ENCODE measurements at regions of chr9 and their contacts with region 1.

Region 1: DNA sequence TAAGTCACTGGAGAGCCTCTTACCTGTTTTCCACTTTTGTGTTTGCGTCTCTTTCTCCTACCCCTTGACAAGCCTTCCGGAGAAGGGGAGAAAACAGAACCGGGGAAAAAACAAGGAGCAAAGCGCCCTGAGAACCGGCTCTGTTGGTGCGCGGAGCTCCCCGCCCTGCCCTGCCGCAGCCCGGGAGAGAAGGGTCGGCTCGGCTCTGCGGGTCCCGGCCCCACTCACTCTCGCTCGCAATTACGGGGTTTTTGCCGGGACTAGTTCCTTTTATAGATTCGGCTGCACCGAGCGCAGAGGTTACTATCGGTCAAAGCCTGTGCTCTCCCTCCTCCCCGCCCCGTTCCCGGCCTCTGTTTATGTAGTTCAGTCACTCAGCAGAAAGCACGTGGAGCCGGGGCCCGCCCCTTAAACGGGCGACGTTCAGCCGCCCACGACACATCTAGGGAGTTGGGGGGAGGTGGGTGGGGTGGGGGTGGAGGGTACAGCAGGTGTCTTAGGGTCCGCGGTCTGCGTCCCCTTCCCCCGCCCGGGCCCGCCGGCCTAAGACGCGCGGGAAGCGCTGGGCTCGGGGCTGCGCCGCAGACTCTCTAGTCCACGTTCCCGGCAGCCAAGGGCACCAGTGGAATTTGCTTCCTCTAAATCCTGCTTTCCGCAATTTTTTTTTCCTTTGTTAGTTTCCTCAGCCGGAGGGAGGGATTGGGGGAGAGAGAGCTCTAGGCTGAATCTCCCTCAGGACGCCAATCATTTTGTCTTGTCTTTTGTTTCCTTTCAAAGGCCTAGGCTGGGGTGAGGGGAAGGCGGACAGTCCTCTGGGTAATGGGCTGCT is at the start of gene ABCA1:
- DNase-seq: peak; percentile 82
- H3K4me3 ChIP-seq: peak within 1 kb of the TSS; percentile 22 to 93 (median 53)
- H3K27ac ChIP-seq: no peak within 1 kb of the TSS
- H3K4me1 ChIP-seq: peaks cover 8% of the 10 kb centered on the region
- H3K27me3 ChIP-seq: no peaks in the 10 kb centered on the region
- CTCF ChIP-seq: no peak
- POLR2A ChIP-seq: no peak
- total RNA-seq, gene ABCA1: 6.6 and 9.8 TPM in 2 replicates

Region 2: GRCh38 chr9:104780799-104781395 is 147.2 kb before region 1 on chr9:
- CTCF ChIA-PET with region 1: interaction called, 3 read pairs
- POLR2A ChIA-PET with region 1: no interaction called
- dilution Hi-C with region 1: no loop called
- intact Hi-C with region 1: loop called (anchors 2 kb)
- DNase-seq: peak; percentile 29
- H3K4me3 ChIP-seq: no peak overlapping the region
- H3K27ac ChIP-seq: no peak overlapping the region
- H3K4me1 ChIP-seq: no peaks in the 10 kb centered on the region
- H3K27me3 ChIP-seq: peaks cover 0 to 5% of the 10 kb centered on the region in 2 experiments
- CTCF ChIP-seq: peak; percentile 16 to 23
- POLR2A ChIP-seq: no peak

Region 3: GRCh38 chr9:104831681-104832080 is 96.4 kb before region 1 on chr9:
- CTCF ChIA-PET with region 1: interaction called, 6 read pairs
- POLR2A ChIA-PET with region 1: interaction called, 9 read pairs
- dilution Hi-C with region 1: no loop called
- intact Hi-C with region 1: loop called (anchors 1 kb)
- DNase-seq: no peak
- H3K4me3 ChIP-seq: no peak overlapping the region
- H3K27ac ChIP-seq: peak overlapping the region; percentile 15
- H3K4me1 ChIP-seq: peaks cover 45% of the 10 kb centered on the region
- H3K27me3 ChIP-seq: no peaks in the 10 kb centered on the region
- CTCF ChIP-seq: no peak
- POLR2A ChIP-seq: no peak

Region 4: DNA sequence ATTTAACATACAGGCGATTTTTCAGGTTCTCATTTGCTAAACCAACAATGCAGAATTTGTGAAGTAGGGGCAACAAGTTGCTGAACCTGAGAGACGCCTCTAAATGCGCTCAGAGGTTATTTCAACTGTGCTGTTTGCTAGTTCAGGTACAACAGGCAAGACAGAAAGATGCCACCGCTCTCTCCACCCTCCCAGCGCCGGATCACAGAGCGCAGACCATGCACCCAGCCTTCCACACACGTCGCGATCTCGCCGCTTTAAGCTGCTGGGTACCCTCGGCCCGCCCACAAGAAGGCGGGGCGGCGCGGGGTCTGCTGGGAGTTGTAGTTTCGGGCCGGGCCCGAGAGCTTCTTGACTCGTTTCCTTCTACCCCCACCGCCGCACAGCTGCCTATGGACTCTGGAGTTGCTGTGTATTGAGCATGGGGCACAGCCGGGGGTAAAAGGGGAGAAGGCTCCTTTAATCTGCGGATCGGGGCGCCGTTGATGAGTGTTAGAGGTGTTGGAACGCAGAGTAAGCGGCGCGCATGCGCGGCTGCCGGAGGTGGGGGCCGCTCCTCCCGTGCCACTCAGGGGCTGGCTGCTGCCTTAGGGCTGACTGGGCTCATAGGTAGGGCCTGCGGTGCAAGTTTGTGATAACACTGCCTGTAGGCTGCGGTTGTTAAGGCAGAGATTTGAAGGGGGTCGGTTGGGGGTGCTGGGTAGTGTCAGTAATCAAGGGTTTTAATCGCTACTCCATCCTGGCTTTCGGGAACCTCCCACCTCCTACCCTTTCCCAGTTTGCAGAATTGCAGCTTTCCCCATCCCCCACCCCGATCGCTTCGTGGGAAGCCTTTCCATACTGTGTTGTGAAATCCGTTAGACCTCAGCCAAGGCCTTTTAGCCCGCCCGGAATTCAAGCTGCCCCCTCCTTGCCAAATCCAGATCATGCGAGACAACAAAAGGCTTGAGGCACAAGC is 40.2 kb after region 1 on chr9:
- CTCF ChIA-PET with region 1: interaction called, 12 read pairs
- POLR2A ChIA-PET with region 1: interaction called, 10 read pairs
- dilution Hi-C with region 1: no loop called
- intact Hi-C with region 1: loop called (anchors 1 kb)
- DNase-seq: peak; percentile 86
- H3K4me3 ChIP-seq: peak overlapping the region; percentile 63 to 93 (median 87)
- H3K27ac ChIP-seq: peak overlapping the region; percentile 58
- H3K4me1 ChIP-seq: peaks cover 6% of the 10 kb centered on the region
- H3K27me3 ChIP-seq: peaks cover 3% of the 10 kb centered on the region in 2 experiments
- CTCF ChIP-seq: no peak
- POLR2A ChIP-seq: no peak

Region 5: GRCh38 chr9:105157130-105157583 is 229.0 kb after region 1 on chr9:
- CTCF ChIA-PET with region 1: interaction called, 11 read pairs
- POLR2A ChIA-PET with region 1: no interaction called
- dilution Hi-C with region 1: no loop called
- intact Hi-C with region 1: loop called (anchors 1 kb)
- DNase-seq: peak; percentile 63
- H3K4me3 ChIP-seq: no peak overlapping the region
- H3K27ac ChIP-seq: no peak overlapping the region
- H3K4me1 ChIP-seq: no peaks in the 10 kb centered on the region
- H3K27me3 ChIP-seq: no peaks in the 10 kb centered on the region
- CTCF ChIP-seq: peak; percentile 22 to 40
- POLR2A ChIP-seq: no peak

Region 6: GRCh38 chr9:105299190-105299854 is 371.2 kb after region 1 on chr9:
- CTCF ChIA-PET with region 1: no interaction called
- POLR2A ChIA-PET with region 1: no interaction called
- dilution Hi-C with region 1: no loop called
- intact Hi-C with region 1: loop called (anchors 2 kb)
- DNase-seq: peak; percentile 98
- H3K4me3 ChIP-seq: no peak overlapping the region
- H3K27ac ChIP-seq: peak overlapping the region; percentile 96
- H3K4me1 ChIP-seq: peaks cover 45% of the 10 kb centered on the region
- H3K27me3 ChIP-seq: no peaks in the 10 kb centered on the region
- CTCF ChIP-seq: no peak
- POLR2A ChIP-seq: peak; percentile 69

Measured in endothelial cell of umbilical vein (primary cell).